ENCODE measurements at regions of chr6 and their contacts with region 1.

Region 1: GRCh38 chr6:102619585-102619984 is 1226.1 kb downstream of the GRIK2 start:
- DNase-seq: no peak
- ATAC-seq: no peak
- H3K4me3 ChIP-seq: no peak overlapping the region
- H3K27ac ChIP-seq: no peak overlapping the region
- H3K4me1 ChIP-seq: no peaks in the 10 kb centered on the region
- H3K27me3 ChIP-seq: no peaks in the 10 kb centered on the region
- CTCF ChIP-seq: peak in 7 of 12 donors; percentile 6 to 36 (median 17)
- POLR2A ChIP-seq: no peak

Region 2: GRCh38 chr6:101114703-101115102 is 1504.9 kb before region 1 on chr6:
- intact Hi-C with region 1: loop called in 1 of 10 experiments (anchors 10 kb)
- DNase-seq: no peak
- ATAC-seq: peak in 2 of 4 donors; percentile 53 to 61
- H3K4me3 ChIP-seq: no peak overlapping the region
- H3K27ac ChIP-seq: no peak overlapping the region
- H3K4me1 ChIP-seq: no peaks in the 10 kb centered on the region
- H3K27me3 ChIP-seq: no peaks in the 10 kb centered on the region
- CTCF ChIP-seq: peak in 10 of 12 donors; percentile 14 to 54 (median 48)
- POLR2A ChIP-seq: no peak

Region 3: DNA sequence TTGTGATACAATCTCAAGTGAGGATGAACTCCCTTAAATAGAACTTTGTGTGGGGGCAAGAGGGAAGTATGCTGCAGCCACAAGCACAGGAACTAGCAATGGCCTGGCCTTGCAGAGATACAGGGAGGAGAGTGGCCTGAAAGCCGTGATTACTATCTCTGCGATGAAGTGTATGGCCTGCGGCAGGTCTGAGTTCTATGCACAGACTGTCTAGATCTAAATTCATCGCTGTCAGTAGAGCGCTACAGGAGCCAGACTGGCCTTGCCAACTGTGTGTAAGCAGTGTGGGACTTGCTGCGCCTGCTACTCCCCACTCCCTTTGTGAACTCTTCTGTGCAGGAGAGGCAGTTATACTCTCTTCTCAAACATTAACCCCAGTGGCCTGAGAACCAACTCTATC is 229.0 kb before region 1 on chr6:
- intact Hi-C with region 1: no loop called
- DNase-seq: no peak
- ATAC-seq: no peak
- H3K4me3 ChIP-seq: no peak overlapping the region
- H3K27ac ChIP-seq: no peak overlapping the region
- H3K4me1 ChIP-seq: no peaks in the 10 kb centered on the region
- H3K27me3 ChIP-seq: no peaks in the 10 kb centered on the region
- CTCF ChIP-seq: no peak
- POLR2A ChIP-seq: no peak

Measured in heart left ventricle (tissue), 16 donors.